GM12878 (cell line): ENCODE measurements at regions of chr1 and their contacts with region 1.

Region 1: DNA sequence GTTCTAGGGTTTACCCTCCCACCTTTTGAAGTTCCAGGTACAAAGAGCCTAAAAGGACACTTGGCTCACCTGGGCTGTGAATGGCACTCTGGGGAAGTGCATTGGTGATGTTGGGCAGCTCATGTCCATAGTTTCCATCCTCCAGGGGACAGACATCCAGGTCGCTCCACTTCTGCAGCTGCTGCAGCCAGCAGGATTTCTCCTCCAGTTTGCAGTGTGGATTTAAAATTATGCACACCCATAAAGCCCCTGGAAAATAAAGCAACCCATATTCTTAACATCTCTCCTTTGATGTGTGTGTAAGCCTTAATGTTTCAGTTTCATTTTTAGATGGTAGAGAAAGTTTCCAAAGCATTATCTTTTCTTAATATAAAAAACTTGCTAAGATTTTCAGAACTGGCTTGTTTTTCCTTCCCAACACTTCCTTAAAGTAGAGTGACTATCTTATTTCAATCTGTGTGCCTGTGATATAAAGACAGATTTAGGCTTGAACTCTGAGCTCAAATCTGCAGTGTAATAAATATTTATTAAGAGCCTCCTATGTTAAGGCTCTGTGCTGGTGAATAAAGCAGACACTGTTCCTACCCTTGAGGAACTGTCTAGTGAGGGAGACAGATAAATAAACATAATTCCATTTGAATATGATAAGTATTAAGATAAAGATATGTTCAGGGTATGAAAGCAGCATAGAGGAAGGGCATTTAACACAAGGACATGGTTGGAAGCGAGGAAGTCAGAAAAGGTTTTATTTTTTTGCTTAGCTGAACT is 39.1 kb downstream of the UROD start:
- DNase-seq: no peak
- ATAC-seq: peak; percentile 63
- H3K4me3 ChIP-seq: no peak overlapping the region
- H3K27ac ChIP-seq: peak overlapping the region; percentile 27
- H3K4me1 ChIP-seq: peaks cover 31% of the 10 kb centered on the region
- H3K27me3 ChIP-seq: no peaks in the 10 kb centered on the region
- CTCF ChIP-seq: no peak
- EP300 ChIP-seq: no peak
- POLR2A ChIP-seq: no peak
- RAD21 ChIP-seq: no peak

Region 2: GRCh38 chr1:45033356-45033755 is 17.8 kb before region 1 on chr1:
- CTCF ChIA-PET with region 1: interaction called, 5 read pairs
- POLR2A ChIA-PET with region 1: interaction called, 10 read pairs
- RAD21 ChIA-PET with region 1: interaction called, 5 read pairs
- SMC1A ChIA-PET with region 1: interaction called, 20 read pairs
- in situ Hi-C with region 1: no loop called
- intact Hi-C with region 1: no loop called
- DNase-seq: no peak
- ATAC-seq: peak; percentile 87
- H3K4me3 ChIP-seq: no peak overlapping the region
- H3K27ac ChIP-seq: no peak overlapping the region
- H3K4me1 ChIP-seq: peaks cover 4% of the 10 kb centered on the region
- H3K27me3 ChIP-seq: no peaks in the 10 kb centered on the region
- CTCF ChIP-seq: no peak
- EP300 ChIP-seq: no peak
- POLR2A ChIP-seq: no peak
- RAD21 ChIP-seq: no peak